ENCODE measurements at regions of chr2 and their contacts with region 1.

Region 1: DNA sequence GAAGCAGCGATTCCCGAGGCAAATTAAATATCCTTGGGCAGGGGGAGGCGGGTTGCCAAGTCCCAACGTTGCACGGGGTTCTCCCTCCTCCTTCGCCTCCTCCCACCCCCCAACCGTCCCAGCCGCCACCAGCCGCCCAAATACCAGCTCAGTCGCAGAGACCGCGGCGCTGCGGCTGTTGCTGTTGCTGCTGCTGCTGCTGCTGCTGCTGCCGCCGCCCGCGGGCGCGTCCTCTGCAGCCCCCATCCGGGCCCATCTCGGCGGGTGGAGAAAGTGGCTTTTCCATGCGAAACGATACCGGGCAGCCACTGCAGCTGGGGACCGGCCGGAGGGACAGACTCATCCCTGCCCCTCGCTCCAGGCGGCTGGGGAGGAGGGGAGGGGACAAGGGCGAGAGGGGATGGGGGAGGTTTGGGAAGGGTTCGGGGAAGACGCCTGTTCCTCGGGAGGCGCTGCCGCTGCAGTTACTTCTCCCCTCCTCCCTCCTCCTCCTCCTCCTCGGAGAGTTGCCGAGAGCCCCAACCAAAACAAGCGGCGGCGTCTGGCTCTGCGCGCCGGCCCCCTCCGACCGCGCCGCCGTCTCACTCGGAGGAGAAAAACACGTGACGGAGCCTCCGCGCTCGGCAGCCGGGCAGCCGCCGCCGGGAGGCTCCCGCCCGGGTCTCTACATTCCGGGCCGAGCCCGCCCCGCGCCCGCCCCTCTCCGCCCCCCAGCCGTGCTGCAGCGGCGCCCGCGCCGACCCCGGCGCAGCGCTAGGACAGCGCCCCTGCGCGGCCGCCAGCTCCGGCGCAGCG is at the start of gene IRS1:
- DNase-seq: peak; percentile 89
- H3K4me3 ChIP-seq: peak within 1 kb of the TSS; percentile 79 to 90
- H3K27ac ChIP-seq: peak within 1 kb of the TSS; percentile 74 to 75
- H3K4me1 ChIP-seq: peaks cover 3 to 14% of the 10 kb centered on the region in 2 experiments; a peak in 3 of 4 replicates
- H3K27me3 ChIP-seq: no peaks in the 10 kb centered on the region
- CTCF ChIP-seq: no peak
- EP300 ChIP-seq: no peak
- RAD21 ChIP-seq: peak; percentile 51
- polyA plus RNA-seq, gene IRS1: 15.8 and 16.5 TPM in 2 replicates

Region 2: GRCh38 chr2:225889446-225889850 is 909.9 kb before region 1 on chr2:
- CTCF ChIA-PET with region 1: interaction called, 28 read pairs
- POLR2A ChIA-PET with region 1: interaction called, 3 read pairs
- DNase-seq: peak; percentile 7
- H3K4me3 ChIP-seq: no peak overlapping the region
- H3K27ac ChIP-seq: peak overlapping the region in 1 of 2 experiments; percentile 43; a peak in 1 of 4 replicates
- H3K4me1 ChIP-seq: no peaks in the 10 kb centered on the region
- H3K27me3 ChIP-seq: no peaks in the 10 kb centered on the region
- CTCF ChIP-seq: peak; percentile 82
- EP300 ChIP-seq: peak in 1 of 2 experiments; percentile 25; a peak in 1 of 4 replicates
- RAD21 ChIP-seq: peak; percentile 79

Region 3: DNA sequence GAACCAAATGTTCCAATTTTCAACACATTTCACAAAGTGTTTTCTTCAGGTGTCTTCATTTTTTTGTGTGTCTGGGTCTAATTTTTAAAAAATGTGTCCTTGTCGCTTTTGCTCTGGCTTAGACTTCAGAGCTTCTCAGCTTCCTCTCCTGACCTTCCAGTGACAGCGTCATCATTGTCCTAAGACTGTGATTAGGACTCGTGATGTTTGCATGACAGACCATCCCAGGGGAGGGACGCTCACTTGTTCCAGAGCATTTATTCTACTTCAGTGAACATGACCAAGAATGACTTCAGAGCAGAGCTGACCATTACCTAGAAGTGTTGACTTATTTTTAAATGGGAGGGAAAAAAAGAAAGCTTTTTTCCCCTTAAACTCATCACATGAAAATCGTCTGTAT is 591.7 kb before region 1 on chr2:
- CTCF ChIA-PET with region 1: no interaction called
- POLR2A ChIA-PET with region 1: no interaction called
- DNase-seq: no peak
- H3K4me3 ChIP-seq: no peak overlapping the region
- H3K27ac ChIP-seq: no peak overlapping the region
- H3K4me1 ChIP-seq: peaks cover 0 to 17% of the 10 kb centered on the region in 2 experiments; a peak in 2 of 4 replicates
- H3K27me3 ChIP-seq: no peaks in the 10 kb centered on the region
- CTCF ChIP-seq: no peak
- EP300 ChIP-seq: no peak
- RAD21 ChIP-seq: no peak

Region 4: GRCh38 chr2:226524381-226524897 is 274.9 kb before region 1 on chr2:
- CTCF ChIA-PET with region 1: no interaction called
- POLR2A ChIA-PET with region 1: no interaction called
- DNase-seq: no peak
- H3K4me3 ChIP-seq: no peak overlapping the region
- H3K27ac ChIP-seq: no peak overlapping the region; a peak in 1 of 4 replicates
- H3K4me1 ChIP-seq: no peaks in the 10 kb centered on the region
- H3K27me3 ChIP-seq: no peaks in the 10 kb centered on the region
- CTCF ChIP-seq: no peak
- EP300 ChIP-seq: no peak
- RAD21 ChIP-seq: no peak

Region 5: DNA sequence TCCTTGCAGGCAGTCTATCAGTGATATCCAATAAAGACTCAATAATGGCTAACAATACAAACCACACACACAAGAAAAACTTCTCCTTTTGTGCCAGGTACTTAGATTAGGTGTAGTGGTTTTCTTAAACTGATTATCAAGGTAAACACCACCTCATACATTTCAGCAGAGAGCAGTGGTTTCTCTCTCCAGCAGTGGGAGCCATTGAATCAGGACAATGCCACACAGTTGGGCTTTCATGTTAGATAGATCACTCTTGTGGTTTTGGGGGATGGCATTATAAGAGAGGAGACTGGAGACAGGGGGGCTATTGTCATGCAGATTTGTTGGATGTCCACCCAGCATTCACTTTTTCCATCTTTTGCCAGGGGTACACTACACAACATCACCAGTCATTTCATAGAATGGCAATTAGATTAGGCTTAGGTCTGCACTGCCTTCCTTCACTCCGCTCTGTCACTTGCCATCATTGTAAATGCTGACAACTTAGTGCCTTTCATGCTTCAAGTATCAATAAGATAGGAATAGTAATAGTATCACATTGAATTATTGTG is 13.8 kb after region 1 on chr2:
- CTCF ChIA-PET with region 1: interaction called, 18 read pairs
- POLR2A ChIA-PET with region 1: no interaction called
- DNase-seq: peak; percentile 28
- H3K4me3 ChIP-seq: no peak overlapping the region
- H3K27ac ChIP-seq: no peak overlapping the region
- H3K4me1 ChIP-seq: no peaks in the 10 kb centered on the region
- H3K27me3 ChIP-seq: no peaks in the 10 kb centered on the region
- CTCF ChIP-seq: peak; percentile 56
- EP300 ChIP-seq: no peak
- RAD21 ChIP-seq: peak; percentile 77

Region 6: DNA sequence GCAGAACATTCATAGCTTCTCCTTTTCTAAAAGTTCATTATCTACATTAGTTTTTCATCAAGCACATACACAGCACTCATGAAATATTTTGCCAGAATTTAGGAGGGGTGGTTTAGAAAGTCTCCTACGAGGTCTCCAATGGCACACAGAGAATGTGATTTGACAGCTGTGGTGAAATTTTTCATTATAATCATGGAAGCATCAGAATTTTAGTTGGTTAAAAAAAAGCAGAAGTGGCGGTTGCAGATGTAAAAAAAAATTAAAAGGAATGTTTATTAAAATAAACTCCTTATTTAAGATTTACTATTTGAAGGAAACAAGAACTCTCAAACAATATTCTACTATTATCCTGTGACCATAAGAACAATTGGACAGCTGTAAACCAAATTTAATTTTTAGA is 25.7 kb after region 1 on chr2:
- CTCF ChIA-PET with region 1: interaction called, 11 read pairs
- POLR2A ChIA-PET with region 1: no interaction called
- DNase-seq: no peak
- H3K4me3 ChIP-seq: no peak overlapping the region
- H3K27ac ChIP-seq: no peak overlapping the region
- H3K4me1 ChIP-seq: no peaks in the 10 kb centered on the region; a peak in 1 of 4 replicates
- H3K27me3 ChIP-seq: no peaks in the 10 kb centered on the region
- CTCF ChIP-seq: no peak
- EP300 ChIP-seq: no peak
- RAD21 ChIP-seq: no peak

Region 7: GRCh38 chr2:226984750-226985582 is 185.6 kb after region 1 on chr2:
- CTCF ChIA-PET with region 1: interaction called, 12 read pairs
- POLR2A ChIA-PET with region 1: no interaction called
- DNase-seq: peak; percentile 53
- H3K4me3 ChIP-seq: no peak overlapping the region
- H3K27ac ChIP-seq: no peak overlapping the region
- H3K4me1 ChIP-seq: peaks cover 0 to 5% of the 10 kb centered on the region in 2 experiments; a peak in 2 of 4 replicates
- H3K27me3 ChIP-seq: no peaks in the 10 kb centered on the region
- CTCF ChIP-seq: peak; percentile 78
- EP300 ChIP-seq: no peak
- RAD21 ChIP-seq: peak; percentile 93

Measured in SK-N-SH (cell line).